PC-9 (cell line): ENCODE measurements at regions of chr5 and their contacts with region 1.

Region 1: GRCh38 chr5:42636425-42636824 is 120.2 kb upstream of the CCDC152 start:
- DNase-seq: no peak
- H3K4me3 ChIP-seq: no peak overlapping the region
- H3K27ac ChIP-seq: no peak overlapping the region
- H3K4me1 ChIP-seq: no peaks in the 10 kb centered on the region
- H3K27me3 ChIP-seq: no peaks in the 10 kb centered on the region
- CTCF ChIP-seq: peak; percentile 59; the same call in 1 of the 2 replicates

Region 2: DNA sequence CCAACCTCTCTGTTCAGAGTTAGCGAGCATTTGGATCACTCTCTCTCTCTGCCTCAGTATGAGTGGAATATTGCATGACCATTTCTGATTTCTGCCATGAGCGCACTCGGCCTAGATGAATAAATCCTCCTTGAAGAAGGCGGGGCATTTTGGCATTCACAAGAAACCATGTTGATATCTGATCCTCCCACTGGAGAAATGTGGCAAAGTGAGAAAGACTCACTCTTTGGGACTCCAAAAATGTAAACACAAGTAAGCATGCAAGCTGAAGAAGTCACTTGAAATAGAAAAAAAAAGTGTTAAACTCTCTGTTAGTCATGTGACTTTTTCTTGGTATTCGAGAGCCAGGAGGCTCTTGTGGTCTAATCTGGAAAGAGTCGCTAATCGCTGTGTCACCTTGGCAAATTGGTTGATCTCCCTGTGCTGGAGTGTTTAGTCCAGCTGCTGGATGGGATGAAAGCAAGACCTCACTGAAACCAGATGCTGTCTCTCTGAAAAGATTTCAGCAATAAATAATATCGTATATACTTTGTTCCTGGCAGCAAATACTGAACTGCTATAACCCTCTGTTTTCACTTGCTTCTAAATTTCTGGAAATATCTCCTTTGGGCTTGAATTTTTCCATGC is 117.7 kb before region 1 on chr5:
- CTCF ChIA-PET with region 1: no interaction called
- POLR2A ChIA-PET with region 1: no interaction called
- intact Hi-C with region 1: no loop called
- DNase-seq: peak in 1 of 2 experiments; percentile 22
- H3K4me3 ChIP-seq: no peak overlapping the region
- H3K27ac ChIP-seq: no peak overlapping the region
- H3K4me1 ChIP-seq: no peaks in the 10 kb centered on the region
- H3K27me3 ChIP-seq: no peaks in the 10 kb centered on the region
- CTCF ChIP-seq: no peak

Region 3: GRCh38 chr5:42718591-42718990 is 82.2 kb after region 1 on chr5:
- CTCF ChIA-PET with region 1: no interaction called
- POLR2A ChIA-PET with region 1: no interaction called
- intact Hi-C with region 1: loop called (anchors 5 kb)
- DNase-seq: no peak
- H3K4me3 ChIP-seq: no peak overlapping the region
- H3K27ac ChIP-seq: no peak overlapping the region
- H3K4me1 ChIP-seq: no peaks in the 10 kb centered on the region
- H3K27me3 ChIP-seq: no peaks in the 10 kb centered on the region
- CTCF ChIP-seq: no peak